Naive thymus-derived CD8-positive, alpha-beta T cell (primary cell): ENCODE measurements at regions of chr12 and their contacts with region 1.

Region 1: GRCh38 chr12:7970475-7971252 is 34.7 kb upstream of the SLC2A3 start:
- DNase-seq: peak; percentile 75 to 91 (median 82)
- ATAC-seq: peak; percentile 87 to 91
- H3K4me3 Mint-ChIP-seq: peak overlapping the region; percentile 79 to 92 (median 87)
- H3K27ac Mint-ChIP-seq: peak overlapping the region; percentile 94 to 99 (median 96)
- H3K4me1 Mint-ChIP-seq: peaks cover 10 to 33% (median 30%) of the 10 kb centered on the region in 4 donors
- H3K27me3 Mint-ChIP-seq: no peaks in the 10 kb centered on the region

Region 2: GRCh38 chr12:7959701-7960121 is 11.0 kb before region 1 on chr12:
- POLR2A ChIA-PET with region 1: interaction called, 86 read pairs
- DNase-seq: peak in 9 of 10 donors; percentile 11 to 71 (median 42)
- ATAC-seq: peak; percentile 40 to 52
- H3K4me3 Mint-ChIP-seq: peak overlapping the region; percentile 80 to 95 (median 91)
- H3K27ac Mint-ChIP-seq: peak overlapping the region; percentile 89 to 99 (median 97)
- H3K4me1 Mint-ChIP-seq: peaks cover 19 to 48% (median 40%) of the 10 kb centered on the region in 4 donors
- H3K27me3 Mint-ChIP-seq: no peaks in the 10 kb centered on the region

Region 3: DNA sequence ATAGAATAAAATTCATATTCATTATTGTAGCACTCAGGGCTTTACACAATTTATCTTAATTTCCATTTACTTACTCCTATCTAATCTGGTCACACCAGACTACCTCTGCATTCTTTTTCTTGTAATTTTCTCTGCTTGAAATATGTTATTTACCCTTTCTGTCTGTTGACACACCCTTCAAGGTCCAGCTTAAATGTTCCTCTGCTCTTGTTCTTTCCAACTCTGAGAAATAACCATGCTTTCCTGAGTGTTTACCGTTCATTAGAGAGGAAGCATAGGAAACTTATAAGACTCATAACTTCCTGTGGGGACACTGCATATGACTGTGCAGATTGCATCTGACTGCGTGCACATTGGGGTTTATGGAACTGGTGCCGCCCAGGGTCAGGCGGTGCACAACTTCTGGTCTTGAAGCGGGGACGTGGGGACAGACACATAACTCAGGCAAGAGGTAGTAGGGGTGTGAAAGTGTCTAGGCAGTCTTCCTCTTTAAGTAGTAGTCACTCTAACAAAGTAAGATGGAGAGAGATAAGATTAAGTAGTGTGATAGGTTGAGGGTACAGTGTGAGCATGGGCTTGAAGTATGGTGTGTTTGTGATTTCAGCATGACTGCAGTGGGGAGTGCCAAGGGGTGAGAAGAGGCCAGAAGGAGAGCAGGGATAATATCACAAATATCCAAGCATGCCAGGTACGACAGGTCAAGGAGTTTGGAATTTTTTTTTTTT is 19.3 kb after region 1 on chr12:
- POLR2A ChIA-PET with region 1: interaction called, 12 read pairs
- DNase-seq: peak in 5 of 10 donors; percentile 14 to 39 (median 31)
- ATAC-seq: peak; percentile 80 to 91
- H3K4me3 Mint-ChIP-seq: peak overlapping the region; percentile 38 to 78 (median 70)
- H3K27ac Mint-ChIP-seq: peak overlapping the region; percentile 39 to 93 (median 82)
- H3K4me1 Mint-ChIP-seq: peaks cover 6 to 34% (median 19%) of the 10 kb centered on the region in 4 donors
- H3K27me3 Mint-ChIP-seq: no peaks in the 10 kb centered on the region